Mucosa of descending colon (tissue), 3 donors: ENCODE measurements at regions of chr11 and their contacts with region 1.

Region 1: GRCh38 chr11:113289431-113290187 is 24.8 kb upstream of the TTC12 start:
- DNase-seq: peak in 2 of 3 donors; percentile 57 to 75
- ATAC-seq: peak; percentile 85
- H3K4me3 ChIP-seq: no peak overlapping the region
- H3K4me1 ChIP-seq: no peaks in the 10 kb centered on the region
- CTCF ChIP-seq: peak; percentile 74

Region 2: DNA sequence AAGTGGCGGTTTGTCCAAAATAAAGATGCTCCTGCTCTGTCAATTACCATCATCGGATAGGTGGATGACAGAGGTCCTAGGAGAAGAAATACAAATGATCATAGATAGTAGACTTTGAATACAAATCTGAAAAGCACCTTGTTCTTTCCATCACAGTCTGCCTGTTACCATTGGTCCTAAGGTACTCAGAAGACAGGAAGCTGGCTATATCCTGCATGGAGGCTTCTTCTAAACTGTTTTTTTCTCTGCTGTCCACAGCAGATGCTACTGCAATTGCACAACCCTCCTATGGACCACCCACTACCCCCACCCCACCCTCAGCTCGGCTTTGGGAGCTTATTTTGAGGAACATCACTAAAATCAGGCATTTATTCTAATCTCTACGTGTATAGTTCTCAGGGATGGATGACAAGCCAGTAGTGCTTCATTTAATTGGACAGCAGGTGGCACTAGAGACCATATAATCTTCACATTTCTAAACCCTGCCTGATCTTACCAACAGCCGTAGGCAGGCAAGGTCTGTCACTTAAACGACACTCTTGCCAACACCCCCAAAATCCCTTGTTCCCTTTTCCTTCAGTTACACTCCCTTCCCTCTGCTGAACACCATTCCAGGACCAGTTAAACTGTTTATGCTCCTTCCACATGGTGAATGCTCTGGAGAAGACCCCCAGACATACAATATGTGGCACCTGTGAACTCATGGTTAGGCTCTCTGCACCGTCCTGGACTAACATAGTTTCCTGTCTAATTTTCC is 1070.0 kb before region 1 on chr11:
- intact Hi-C with region 1: loop called in 1 of 2 experiments (anchors 10 kb)
- DNase-seq: peak in 1 of 3 donors; percentile 65
- ATAC-seq: peak; percentile 97
- H3K4me3 ChIP-seq: no peak overlapping the region
- H3K4me1 ChIP-seq: no peaks in the 10 kb centered on the region
- CTCF ChIP-seq: peak; percentile 38

Region 3: DNA sequence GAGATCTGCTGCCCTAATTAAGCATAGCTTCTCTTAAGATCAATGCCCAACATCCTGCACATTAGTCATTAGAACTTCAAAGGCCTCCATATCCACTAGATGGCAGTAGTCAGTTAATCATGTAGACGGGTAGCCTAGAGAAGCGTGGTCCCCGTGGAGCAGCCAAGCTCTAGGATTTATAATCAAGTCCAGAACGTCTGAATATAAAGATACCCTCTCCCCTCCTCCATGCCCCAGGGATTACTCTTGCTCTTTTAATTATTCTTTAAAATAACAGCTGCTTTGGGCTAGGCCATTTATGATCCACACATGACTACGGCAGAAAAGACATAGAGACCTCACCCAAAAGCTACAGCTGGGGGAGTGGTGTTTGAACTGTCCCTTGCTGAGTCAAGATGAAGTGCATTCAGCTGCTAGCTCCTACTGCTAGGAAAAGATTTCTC is 701.3 kb before region 1 on chr11:
- intact Hi-C with region 1: loop called (anchors 5 kb)
- DNase-seq: peak; percentile 24 to 68 (median 49)
- ATAC-seq: peak; percentile 76
- H3K4me3 ChIP-seq: no peak overlapping the region
- H3K4me1 ChIP-seq: no peaks in the 10 kb centered on the region
- CTCF ChIP-seq: no peak